ENCODE measurements at regions of chr3 and their contacts with region 1.

Region 1: DNA sequence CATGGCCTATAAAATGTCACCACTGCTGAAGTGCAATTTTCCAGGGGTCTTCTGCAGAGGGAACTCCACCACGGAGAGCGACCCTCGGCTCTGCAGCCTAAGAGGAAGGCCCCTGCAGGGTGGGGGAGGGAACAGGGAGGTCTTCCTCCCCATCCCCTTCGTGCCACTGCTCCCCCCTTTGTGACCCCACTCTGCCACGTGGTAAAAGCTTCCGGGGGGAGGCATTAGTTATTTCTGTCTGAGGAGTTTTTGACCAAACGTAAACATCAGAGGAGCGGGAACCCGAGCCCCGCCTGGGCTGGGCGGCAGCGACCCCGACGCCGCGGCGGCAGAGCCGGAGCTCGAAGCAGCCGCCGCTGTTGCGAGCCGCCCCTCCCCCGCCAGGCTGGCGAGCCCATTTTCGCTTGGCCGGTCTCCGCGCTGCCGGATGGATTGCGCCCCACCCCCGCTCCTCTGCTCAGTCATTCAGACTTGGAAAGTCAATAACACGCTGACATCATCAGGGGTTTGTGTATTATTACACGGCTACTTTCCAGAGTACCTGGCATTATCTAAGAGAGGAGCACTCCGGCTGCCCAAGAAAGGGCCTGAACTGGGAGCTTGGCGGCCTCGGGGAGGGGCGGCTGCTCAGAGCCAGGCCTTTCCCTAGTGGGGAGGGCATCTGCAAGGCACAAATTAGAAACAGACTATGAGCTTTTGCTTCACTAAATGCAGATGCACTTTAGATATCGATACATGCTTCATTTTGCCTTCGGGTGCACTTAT is 162.5 kb upstream of the TBL1XR1 start:
- DNase-seq: peak; percentile 99
- ATAC-seq: peak; percentile 90
- H3K4me3 ChIP-seq: peak overlapping the region; percentile 5; the same call in 1 of the 2 replicates
- H3K27ac ChIP-seq: peak overlapping the region; percentile 59
- H3K4me1 ChIP-seq: peaks cover 27% of the 10 kb centered on the region
- H3K27me3 ChIP-seq: no peaks in the 10 kb centered on the region
- CTCF ChIP-seq: no peak
- POLR2A ChIP-seq: 0 out of 2 replicates have a peak, but pooled peaks have one; percentile 28
- RAD21 ChIP-seq: peak; percentile 71

Region 2: DNA sequence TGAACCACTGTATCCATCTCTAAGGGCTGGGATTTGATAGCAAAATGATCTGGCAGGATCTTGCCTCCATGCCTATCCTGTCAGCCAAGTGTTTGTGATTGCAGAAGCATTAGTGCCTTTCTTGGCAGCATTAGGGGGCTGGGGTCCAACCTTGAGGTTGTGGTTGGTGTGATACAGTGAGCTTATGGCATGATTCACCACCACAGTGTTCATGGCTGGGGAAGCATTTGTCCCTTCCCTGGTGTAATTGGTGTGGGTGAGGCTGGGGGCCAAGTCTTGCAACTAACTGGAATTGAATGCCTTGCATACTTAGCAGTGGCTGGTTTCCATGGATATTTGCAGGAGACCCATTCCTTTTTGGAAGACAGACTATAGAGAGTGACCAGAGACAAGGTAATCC is 108.6 kb after region 1 on chr3:
- CTCF ChIA-PET with region 1: no interaction called
- POLR2A ChIA-PET with region 1: no interaction called
- dilution Hi-C with region 1: no loop called
- in situ Hi-C with region 1: no loop called
- intact Hi-C with region 1: loop called (anchors 5 kb)
- DNase-seq: peak; percentile 96
- ATAC-seq: peak; percentile 78
- H3K4me3 ChIP-seq: no peak overlapping the region
- H3K27ac ChIP-seq: peak overlapping the region; percentile 2; the same call in 1 of the 2 replicates
- H3K4me1 ChIP-seq: peaks cover 12% of the 10 kb centered on the region
- H3K27me3 ChIP-seq: no peaks in the 10 kb centered on the region
- CTCF ChIP-seq: no peak
- POLR2A ChIP-seq: no peak
- RAD21 ChIP-seq: no peak; the same call in 1 of the 2 replicates

Region 3: GRCh38 chr3:177516158-177517011 is 156.6 kb after region 1 on chr3:
- CTCF ChIA-PET with region 1: no interaction called
- POLR2A ChIA-PET with region 1: no interaction called
- dilution Hi-C with region 1: no loop called
- in situ Hi-C with region 1: no loop called
- intact Hi-C with region 1: loop called (anchors 5 kb)
- DNase-seq: peak; percentile 90
- ATAC-seq: peak; percentile 90
- H3K4me3 ChIP-seq: no peak overlapping the region
- H3K27ac ChIP-seq: peak overlapping the region; percentile 61
- H3K4me1 ChIP-seq: peaks cover 16% of the 10 kb centered on the region
- H3K27me3 ChIP-seq: no peaks in the 10 kb centered on the region
- CTCF ChIP-seq: no peak
- POLR2A ChIP-seq: no peak
- RAD21 ChIP-seq: no peak

Region 4: GRCh38 chr3:177777699-177778098 is 417.9 kb after region 1 on chr3:
- CTCF ChIA-PET with region 1: no interaction called
- POLR2A ChIA-PET with region 1: no interaction called
- dilution Hi-C with region 1: no loop called
- in situ Hi-C with region 1: no loop called
- intact Hi-C with region 1: loop called (anchors 2 kb)
- DNase-seq: peak; percentile 56
- ATAC-seq: peak; percentile 43; the same call in 1 of the 2 replicates
- H3K4me3 ChIP-seq: no peak overlapping the region
- H3K27ac ChIP-seq: no peak overlapping the region
- H3K4me1 ChIP-seq: peaks cover 20% of the 10 kb centered on the region
- H3K27me3 ChIP-seq: no peaks in the 10 kb centered on the region
- CTCF ChIP-seq: peak; percentile 57
- POLR2A ChIP-seq: no peak
- RAD21 ChIP-seq: peak; percentile 75

Region 5: DNA sequence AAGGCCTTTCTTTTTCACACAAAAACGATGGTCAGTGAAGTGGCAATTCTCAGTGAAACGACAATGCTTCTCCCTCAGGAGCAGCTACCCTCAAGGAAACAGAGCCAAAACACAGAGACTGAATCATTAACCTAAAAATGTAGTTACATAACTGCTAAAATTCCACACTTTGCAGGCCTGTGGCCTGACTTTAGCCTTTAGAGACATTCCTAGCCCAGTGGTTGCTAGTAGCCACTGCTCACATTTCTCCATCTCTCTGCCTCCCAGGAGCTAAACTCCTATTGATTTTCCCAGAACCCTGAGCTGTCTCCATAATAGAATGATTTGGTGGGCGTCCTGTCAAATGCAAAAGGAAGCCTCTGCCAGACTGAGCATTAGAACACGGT is 546.3 kb after region 1 on chr3:
- CTCF ChIA-PET with region 1: no interaction called
- POLR2A ChIA-PET with region 1: no interaction called
- dilution Hi-C with region 1: no loop called
- in situ Hi-C with region 1: no loop called
- intact Hi-C with region 1: loop called (anchors 1 kb)
- DNase-seq: peak; percentile 83
- ATAC-seq: peak; percentile 63
- H3K4me3 ChIP-seq: no peak overlapping the region
- H3K27ac ChIP-seq: peak overlapping the region; percentile 77; the same call in 1 of the 2 replicates
- H3K4me1 ChIP-seq: peaks cover 12% of the 10 kb centered on the region
- H3K27me3 ChIP-seq: no peaks in the 10 kb centered on the region
- CTCF ChIP-seq: 0 out of 2 replicates have a peak, but pooled peaks have one; percentile 17
- POLR2A ChIP-seq: no peak
- RAD21 ChIP-seq: peak; percentile 30

Measured in IMR-90 (cell line).